Left cardiac atrium (tissue), 4 donors: ENCODE measurements at regions of chr7 and their contacts with region 1.

Region 1: GRCh38 chr7:129502376-129502776 is at the start of gene SMKR1:
- DNase-seq: peak; percentile 79
- ATAC-seq: peak; percentile 97 to 98
- total RNA-seq, gene SMKR1: not detected

Region 2: GRCh38 chr7:129134356-129134987 is 367.9 kb before region 1 on chr7:
- intact Hi-C with region 1: no loop called
- DNase-seq: no peak
- ATAC-seq: peak; percentile 12 to 37

Region 3: DNA sequence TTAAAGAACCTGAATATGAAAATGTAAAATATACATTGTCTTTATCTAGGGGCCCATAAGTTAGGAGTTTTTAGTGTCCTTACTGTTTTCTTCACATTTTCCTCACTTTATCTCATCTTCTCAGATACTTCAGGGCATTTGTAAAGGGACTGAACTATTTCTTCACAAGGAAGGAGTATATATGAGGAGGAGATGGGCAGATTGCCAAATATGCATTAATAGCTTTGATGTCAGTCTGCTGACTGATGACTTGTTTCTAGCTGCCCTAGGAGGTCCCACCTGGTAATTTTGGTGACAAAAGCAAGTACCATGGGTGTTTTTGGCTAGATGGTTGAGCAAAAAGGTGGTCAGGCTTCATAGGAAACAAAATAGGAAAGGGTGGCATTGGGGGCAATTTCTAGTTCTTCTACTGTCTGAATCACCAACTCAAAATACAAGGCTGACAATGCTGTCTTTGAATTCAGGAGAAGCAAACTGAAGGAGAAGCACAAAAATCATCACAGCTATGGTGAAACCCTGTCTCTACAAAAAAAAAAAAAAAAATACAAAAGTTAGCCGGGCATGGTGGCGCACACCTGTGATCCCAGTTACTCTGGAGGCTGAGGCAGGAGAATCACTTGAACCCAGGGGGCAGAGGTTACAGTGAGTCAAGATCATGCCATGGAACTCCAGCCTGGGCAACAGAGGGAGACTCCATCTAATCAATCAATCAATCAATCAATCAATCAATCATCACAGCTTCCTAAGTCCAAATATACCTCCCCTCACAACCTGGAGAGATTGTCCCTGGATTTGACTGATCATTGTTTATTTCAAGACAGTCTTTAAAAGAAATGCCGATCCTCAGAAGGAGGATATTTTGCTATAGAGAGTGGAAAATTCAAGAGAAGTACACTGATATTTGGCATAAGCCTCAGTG is 78.4 kb before region 1 on chr7:
- intact Hi-C with region 1: no loop called
- DNase-seq: no peak
- ATAC-seq: no peak

Region 4: DNA sequence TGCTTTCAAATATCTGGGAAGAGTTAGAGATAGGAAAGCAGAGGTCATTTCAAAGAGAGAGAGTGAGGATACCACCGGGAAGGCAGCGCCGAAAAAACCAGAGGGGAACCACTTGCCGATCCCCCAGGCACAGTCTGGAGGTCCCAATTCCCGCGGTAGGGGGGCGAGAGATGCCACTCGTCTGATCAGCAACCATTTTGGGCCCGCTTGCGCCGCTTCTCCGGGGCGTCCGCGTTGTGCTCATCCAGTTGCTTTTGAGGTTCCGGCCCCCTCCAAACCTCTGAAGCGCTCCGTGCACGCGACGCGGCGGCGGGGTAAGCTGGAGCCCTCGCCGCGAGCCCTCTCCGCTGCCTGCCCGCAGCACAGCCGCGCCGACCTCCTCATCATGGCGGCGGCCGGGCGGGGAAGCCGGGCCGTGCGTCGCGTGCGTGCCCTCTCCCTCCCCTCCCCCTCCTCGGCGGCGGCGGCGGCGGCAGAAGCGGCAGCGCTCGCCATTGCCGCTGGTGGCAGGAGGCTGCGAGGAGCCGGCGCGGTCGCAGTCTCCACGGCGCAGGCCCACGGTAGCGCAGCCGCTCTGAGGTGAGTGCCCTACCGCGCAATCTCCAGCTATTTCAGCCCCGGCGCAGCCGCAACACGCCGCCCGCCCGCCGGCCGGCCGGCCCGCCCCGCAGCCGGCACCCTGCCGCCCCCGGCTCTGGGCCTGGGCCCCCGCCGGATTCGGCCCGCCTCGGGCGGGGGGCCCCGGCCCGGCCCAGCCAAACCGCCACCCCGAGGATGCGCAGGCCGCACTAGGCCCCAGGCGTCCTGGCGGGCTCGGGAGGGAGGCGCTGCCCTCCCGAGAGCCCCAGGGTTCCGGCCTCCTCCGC is 109.1 kb after region 1 on chr7 and contains the start of gene NRF1:
- intact Hi-C with region 1: loop called in 1 of 2 experiments (anchors 10 kb)
- DNase-seq: peak; percentile 92
- ATAC-seq: peak; percentile 96 to 97
- total RNA-seq, gene NRF1: 10.0 to 15.4 TPM

Region 5: GRCh38 chr7:129689995-129690581 is 187.7 kb after region 1 on chr7:
- intact Hi-C with region 1: no loop called
- DNase-seq: no peak
- ATAC-seq: no peak

Region 6: DNA sequence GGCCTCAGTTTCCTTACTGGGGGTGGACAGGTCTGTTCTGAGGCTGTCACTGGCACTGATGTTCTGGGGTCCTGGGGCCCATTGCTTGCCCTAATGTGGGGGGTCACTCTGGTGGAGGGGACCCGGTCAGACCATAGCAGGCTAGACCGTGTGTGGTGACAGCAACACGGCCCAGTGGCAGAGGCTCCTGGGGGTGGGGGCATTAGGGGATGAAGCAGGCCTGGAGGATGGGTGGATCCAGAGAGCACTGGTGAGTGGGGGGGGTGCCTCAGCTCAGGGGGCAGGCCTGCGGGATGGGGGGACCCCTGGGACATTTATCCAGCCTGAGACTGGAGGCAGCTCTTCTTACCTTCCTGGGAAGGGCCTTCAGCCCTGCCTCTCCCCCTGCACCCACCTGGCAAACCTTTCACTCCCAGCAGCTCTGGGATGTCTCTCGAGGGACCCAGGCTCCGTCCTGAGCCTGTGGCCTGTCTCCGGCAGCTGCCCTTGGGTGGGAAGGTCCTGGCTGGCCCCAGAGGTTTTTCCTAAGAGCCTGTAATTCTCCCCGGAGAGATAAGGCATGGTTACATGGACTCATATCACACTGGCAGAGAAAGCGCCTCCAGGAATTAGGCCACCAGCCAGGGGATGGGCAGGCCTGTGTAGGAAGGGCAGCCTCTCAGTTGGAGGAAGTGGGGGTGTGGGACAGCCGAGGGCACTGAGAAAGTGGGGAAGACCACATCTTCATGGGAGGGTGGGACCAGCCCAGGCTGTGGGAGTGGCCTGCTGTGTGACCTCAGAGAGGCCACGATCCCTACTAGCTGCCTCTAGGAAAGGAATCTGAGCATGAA is 302.7 kb after region 1 on chr7:
- intact Hi-C with region 1: no loop called
- DNase-seq: peak; percentile 34
- ATAC-seq: peak; percentile 82 to 91